ENCODE measurements at regions of chr3 and their contacts with region 1.

Region 1: DNA sequence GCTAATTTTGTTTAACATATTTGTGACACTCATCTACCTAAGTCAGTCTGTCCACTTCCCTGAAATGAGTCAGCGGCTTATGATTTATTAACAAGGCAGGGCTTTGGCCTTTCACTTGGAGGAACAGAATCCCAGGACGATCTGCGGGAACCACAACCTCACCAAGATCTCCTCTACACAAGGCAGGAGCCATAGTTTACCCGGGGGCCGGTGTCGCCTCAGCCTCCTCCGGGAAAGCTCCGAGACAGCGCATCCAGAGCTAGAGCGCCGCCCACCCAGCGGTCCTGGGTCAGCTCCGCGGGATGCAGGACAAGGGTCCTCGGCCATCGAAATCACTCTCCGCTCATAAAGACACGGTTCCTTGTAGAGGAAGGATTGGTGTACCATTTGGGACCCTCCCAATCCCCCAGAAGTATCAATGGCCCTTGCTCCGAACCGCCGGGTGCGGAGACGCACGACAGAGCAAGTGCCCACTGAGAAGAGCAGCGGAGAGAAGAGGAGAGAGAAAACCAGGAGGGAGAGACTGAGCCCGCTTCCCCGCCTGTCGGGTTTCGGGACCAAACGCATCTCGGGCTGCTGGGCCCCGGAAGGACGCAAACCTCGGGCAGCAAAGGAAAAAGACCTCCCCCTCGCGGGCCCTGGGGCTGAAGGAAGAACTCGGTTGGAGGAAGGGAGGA is 13.1 kb upstream of the ALCAM start:
- H3K4me3 Mint-ChIP-seq: peak overlapping the region; percentile 83
- H3K27ac Mint-ChIP-seq: peak overlapping the region; percentile 83
- H3K4me1 Mint-ChIP-seq: peaks cover 71% of the 10 kb centered on the region
- H3K27me3 Mint-ChIP-seq: peaks cover 5% of the 10 kb centered on the region

Region 2: DNA sequence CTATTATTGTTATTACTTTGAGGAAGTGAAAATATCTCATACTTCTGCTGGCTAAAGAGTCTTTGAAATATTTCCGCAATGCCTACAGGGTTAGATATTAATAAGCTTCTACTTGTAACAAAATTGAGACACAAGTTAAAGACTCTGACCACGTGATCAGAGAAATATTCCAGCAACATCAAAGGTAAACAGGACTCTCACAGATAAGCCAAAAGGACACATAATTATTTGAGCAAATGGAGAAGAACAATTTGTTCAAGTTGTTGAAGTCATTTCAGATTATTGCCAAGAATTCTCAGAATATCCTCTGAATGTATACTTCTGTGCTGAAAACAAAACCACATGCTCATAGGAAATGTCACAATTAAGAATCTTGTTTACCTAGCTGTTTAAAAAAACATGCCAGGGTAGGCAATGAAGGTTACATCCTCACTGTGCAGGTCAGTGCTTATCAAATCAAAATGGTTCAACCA is 212.7 kb before region 1 on chr3:
- intact Hi-C with region 1: loop called (anchors 5 kb)
- H3K4me3 Mint-ChIP-seq: no peak overlapping the region
- H3K27ac Mint-ChIP-seq: peak overlapping the region; percentile 45
- H3K4me1 Mint-ChIP-seq: peaks cover 23% of the 10 kb centered on the region
- H3K27me3 Mint-ChIP-seq: no peaks in the 10 kb centered on the region

Region 3: GRCh38 chr3:105317841-105318240 is 35.8 kb before region 1 on chr3:
- intact Hi-C with region 1: loop called (anchors 5 kb)
- H3K4me3 Mint-ChIP-seq: no peak overlapping the region
- H3K27ac Mint-ChIP-seq: no peak overlapping the region
- H3K4me1 Mint-ChIP-seq: peaks cover 5% of the 10 kb centered on the region
- H3K27me3 Mint-ChIP-seq: no peaks in the 10 kb centered on the region